OCI-LY7 (cell line): ENCODE measurements at regions of chr10 and their contacts with region 1.

Region 1: GRCh38 chr10:37109000-37109399 is 16.4 kb upstream of the ANKRD30A start:
- DNase-seq: no peak
- H3K4me3 ChIP-seq: no peak overlapping the region
- H3K27ac ChIP-seq: no peak overlapping the region
- H3K4me1 ChIP-seq: no peaks in the 10 kb centered on the region
- CTCF ChIP-seq: no peak

Region 2: GRCh38 chr10:37067576-37067975 is 41.4 kb before region 1 on chr10:
- CTCF ChIA-PET with region 1: no interaction called
- POLR2A ChIA-PET with region 1: no interaction called
- intact Hi-C with region 1: loop called (anchors 5 kb)
- DNase-seq: no peak
- H3K4me3 ChIP-seq: no peak overlapping the region
- H3K27ac ChIP-seq: no peak overlapping the region
- H3K4me1 ChIP-seq: no peaks in the 10 kb centered on the region
- CTCF ChIP-seq: no peak